AG04449 (cell line): ENCODE measurements at regions of chr1 and their contacts with region 1.

Region 1: DNA sequence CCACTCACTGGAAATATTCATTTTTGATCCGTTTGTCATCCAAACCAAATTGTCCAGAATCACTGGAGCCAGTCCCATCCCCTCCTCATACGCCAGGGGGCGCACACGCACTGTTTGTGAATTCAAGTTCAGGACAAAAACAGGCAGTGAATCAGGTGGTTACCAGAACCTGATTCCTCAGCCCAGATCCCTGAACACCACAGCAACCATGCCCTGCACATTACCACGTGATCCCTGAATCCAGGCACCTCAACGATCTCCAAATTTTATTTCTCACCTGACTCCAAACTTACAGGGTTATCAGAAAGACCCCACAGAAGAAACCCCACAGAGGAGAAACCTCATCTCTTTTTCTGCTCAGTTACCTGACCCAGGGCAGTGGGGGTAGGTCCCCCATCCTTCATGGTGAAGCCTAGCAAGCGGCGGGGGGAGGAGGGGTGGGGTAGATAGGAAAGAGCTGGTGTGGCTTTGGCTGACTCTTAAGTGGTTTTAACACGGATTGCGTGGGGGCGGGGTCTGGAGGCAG is 1.4 kb upstream of the PTPRF start:
- DNase-seq: peak; percentile 53
- H3K4me3 ChIP-seq: no peak overlapping the region
- CTCF ChIP-seq: peak; percentile 91

Region 2: DNA sequence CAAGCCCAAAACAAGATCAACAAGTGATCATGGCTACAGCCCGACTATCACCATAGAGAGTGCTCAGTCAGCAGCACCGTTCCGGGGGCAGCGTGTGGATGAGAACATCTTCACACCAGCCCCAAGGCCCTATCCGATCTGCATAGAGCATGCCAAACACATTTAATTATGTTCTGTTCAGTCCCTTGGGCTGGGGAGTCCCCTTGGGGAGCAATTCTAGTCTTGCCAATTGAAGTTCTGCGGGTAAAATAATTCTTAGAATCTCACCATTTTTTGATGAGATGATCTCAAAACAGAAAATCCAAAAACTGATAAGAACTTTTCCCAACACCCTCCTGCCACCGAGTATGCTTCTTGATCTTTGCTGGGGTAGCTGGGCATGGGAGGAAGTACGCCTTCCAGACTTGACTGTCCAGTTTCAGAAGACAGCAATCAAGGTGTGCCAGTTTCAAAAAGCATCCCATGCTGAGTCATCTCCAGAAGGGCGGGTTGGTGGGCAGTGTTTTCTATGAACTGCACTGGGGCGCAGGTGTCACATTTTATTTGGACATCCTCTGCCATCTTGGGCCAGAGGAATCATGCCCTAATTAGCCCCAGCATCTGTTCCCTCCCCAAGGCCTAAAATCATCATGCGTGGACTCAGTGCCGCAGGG is 19.4 kb before region 1 on chr1:
- CTCF ChIA-PET with region 1: interaction called, 10 read pairs
- POLR2A ChIA-PET with region 1: no interaction called
- DNase-seq: no peak
- H3K4me3 ChIP-seq: no peak overlapping the region
- CTCF ChIP-seq: no peak

Region 3: DNA sequence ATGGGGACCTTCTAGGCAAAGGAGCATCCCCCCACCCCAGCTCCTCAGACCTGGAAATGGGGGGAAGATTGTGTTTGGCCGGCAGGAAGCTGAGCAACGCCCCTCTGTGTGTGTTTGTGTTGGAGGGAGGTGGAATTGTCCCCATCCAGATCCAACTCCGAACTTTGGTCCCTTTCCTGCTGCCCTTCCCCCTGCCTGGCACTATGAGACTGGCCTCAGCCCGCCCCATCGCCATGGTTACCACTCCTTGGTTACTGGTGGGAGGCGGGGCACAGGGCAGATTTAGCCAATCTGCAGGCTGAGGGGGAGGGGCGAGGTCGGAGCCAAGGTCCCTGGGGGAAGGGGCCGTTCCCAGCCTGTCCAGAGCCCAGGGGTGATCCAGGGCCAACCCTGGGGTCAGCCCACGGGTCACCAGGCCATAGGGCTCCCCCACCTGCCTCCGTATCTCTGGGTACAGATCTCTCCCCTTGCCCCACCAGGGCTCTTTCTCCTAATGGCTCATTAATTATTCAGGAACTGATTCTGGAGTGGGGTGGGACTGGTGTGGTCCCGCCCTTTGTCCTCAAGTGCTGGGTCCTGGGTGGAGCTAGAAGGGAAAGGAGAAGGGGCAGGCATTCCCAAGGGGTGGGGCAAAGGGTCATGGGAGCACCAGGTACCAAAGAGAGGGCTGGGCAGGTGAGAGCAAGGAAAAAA is 16.6 kb after region 1 on chr1:
- CTCF ChIA-PET with region 1: interaction called, 15 read pairs
- POLR2A ChIA-PET with region 1: no interaction called
- DNase-seq: no peak
- H3K4me3 ChIP-seq: no peak overlapping the region
- CTCF ChIP-seq: no peak

Region 4: DNA sequence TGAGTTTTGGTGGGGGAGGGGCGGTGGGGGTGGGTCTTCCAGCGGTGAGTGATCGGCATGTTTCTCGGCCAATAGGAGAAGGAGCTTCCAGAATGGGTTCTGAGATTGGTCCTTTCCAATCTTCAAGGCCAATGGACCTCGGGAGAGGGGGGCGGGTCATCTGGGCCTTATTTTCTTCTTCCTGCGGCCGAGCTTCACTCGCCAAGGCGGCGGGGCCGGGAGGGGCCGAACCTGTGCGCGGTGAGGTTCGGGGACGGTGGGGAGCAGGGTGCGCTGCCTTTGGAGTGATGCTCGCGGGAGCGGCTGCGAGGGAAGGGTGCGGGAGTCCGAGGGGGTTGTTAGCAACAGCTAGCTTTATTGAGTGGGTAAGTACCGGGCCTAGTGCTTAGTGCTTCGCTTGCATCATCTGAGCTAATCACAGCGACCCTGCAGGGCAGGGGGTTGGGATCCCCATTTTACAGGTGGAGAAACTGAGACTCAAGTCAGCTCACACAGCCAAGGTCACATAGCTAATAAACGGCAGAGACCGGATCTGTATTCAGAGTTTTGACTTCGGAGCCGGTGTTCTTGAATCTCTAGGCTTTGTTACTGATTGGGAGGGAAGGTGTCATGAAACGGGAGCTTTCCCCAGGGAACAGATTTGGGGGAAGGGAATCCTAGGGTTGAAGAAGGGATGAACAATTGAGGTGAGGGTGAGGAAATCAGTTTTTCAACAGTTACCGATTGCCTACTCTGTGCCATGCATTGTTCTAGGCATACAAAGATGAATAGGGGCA is 121.2 kb after region 1 on chr1:
- CTCF ChIA-PET with region 1: interaction called, 30 read pairs
- POLR2A ChIA-PET with region 1: interaction called, 11 read pairs
- DNase-seq: peak; percentile 94
- H3K4me3 ChIP-seq: peak overlapping the region; percentile 99
- CTCF ChIP-seq: no peak

Region 5: DNA sequence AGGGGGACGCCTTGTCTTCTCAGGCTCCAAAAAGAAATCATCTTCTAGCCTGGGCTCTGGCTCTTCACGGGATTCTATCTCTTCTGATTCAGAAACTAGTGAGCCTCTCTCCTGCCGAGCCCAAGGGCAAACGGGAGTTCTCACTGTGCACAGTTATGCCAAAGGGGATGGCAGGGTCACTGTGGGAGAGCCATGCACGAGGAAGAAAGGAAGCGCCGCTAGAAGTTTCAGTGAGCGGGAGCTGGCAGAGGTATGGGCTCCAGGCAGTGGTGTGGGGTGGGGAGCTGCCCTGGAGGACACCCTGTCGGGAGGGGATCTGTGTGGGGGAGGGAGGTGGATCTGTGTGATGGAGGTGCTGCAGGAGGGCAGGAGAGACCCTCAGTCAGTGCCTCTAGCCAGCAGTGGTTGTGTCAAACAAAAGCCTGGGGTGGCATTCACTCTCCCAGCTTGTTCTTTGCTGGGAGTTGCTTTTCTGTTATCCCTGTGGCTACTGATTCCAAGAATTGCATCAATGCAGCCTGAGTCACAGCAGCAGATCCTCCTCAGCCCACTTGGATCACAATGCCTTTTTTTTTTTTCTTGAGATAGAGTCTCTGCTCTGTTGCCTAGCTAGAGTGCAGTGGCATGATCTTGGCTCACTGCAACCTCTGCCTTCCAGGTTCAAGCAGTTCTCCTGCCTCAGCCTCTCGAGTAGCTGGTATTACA is 142.5 kb after region 1 on chr1:
- CTCF ChIA-PET with region 1: interaction called, 10 read pairs
- POLR2A ChIA-PET with region 1: no interaction called
- DNase-seq: peak; percentile 41
- H3K4me3 ChIP-seq: no peak overlapping the region
- CTCF ChIP-seq: no peak

Region 6: GRCh38 chr1:43688594-43689000 is 159.3 kb after region 1 on chr1:
- CTCF ChIA-PET with region 1: interaction called, 14 read pairs
- POLR2A ChIA-PET with region 1: no interaction called
- DNase-seq: no peak
- H3K4me3 ChIP-seq: no peak overlapping the region
- CTCF ChIP-seq: no peak

Region 7: DNA sequence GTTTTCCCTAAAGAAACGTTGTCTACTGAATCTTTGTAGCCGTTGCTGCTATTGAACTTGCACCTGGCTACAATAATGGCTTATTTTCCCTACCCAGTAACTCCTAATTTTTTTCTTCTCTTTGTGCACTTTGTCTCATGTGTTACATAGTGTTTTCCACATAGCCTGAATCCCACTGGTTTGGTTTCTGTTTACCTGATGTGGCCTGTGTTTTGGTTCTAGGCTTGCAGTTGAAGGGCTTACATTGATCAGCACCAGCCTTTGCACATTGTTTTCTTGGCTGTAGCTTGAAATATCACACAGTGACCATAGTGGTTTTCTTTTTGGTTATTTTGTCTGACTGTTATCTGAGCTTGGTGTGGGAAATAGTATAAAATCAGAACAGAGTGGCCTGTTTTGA is 207.6 kb after region 1 on chr1:
- CTCF ChIA-PET with region 1: no interaction called
- POLR2A ChIA-PET with region 1: no interaction called
- DNase-seq: no peak
- H3K4me3 ChIP-seq: no peak overlapping the region
- CTCF ChIP-seq: no peak